AG04449 (cell line): ENCODE measurements at regions of chr7 and their contacts with region 1.

Region 1: GRCh38 chr7:108146070-108146837 is 16.1 kb upstream of the LAMB4 start:
- DNase-seq: peak; percentile 42
- H3K4me3 ChIP-seq: peak overlapping the region; percentile 42
- CTCF ChIP-seq: peak; percentile 79

Region 2: GRCh38 chr7:107743567-107744344 is 402.5 kb before region 1 on chr7 and contains the start of gene CBLL1:
- CTCF ChIA-PET with region 1: interaction called, 20 read pairs
- POLR2A ChIA-PET with region 1: no interaction called
- DNase-seq: peak; percentile 63
- H3K4me3 ChIP-seq: peak within 1 kb of the TSS; percentile 98
- CTCF ChIP-seq: peak; percentile 89

Region 3: GRCh38 chr7:107900496-107901015 is 245.7 kb before region 1 on chr7:
- CTCF ChIA-PET with region 1: interaction called, 14 read pairs
- POLR2A ChIA-PET with region 1: no interaction called
- DNase-seq: no peak
- H3K4me3 ChIP-seq: no peak overlapping the region
- CTCF ChIP-seq: no peak

Region 4: DNA sequence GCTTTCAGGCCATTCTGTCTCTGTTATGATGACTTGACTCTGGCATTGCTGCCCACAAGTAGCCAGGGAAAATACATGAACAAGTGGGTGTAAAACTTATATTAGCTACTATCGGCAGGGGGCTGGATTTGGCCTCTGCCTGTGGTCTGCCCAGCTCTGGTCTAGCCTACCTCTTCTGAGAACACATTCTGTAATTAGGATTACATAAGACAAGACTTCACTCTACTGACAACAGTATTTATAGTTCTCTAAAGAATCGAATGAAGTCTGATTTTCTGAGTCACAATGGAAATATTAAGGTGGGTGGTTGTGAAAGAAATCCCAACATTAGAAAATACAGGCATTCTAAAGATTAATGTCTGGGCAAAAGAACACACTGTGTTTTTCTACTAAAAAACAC is 199.8 kb before region 1 on chr7:
- CTCF ChIA-PET with region 1: interaction called, 16 read pairs
- POLR2A ChIA-PET with region 1: no interaction called
- DNase-seq: no peak
- H3K4me3 ChIP-seq: no peak overlapping the region
- CTCF ChIP-seq: no peak

Region 5: GRCh38 chr7:108002726-108003598 is 143.3 kb before region 1 on chr7 and contains the start of gene LAMB1:
- CTCF ChIA-PET with region 1: interaction called, 33 read pairs
- POLR2A ChIA-PET with region 1: no interaction called
- DNase-seq: no peak
- H3K4me3 ChIP-seq: peak within 1 kb of the TSS; percentile 82
- CTCF ChIP-seq: no peak

Region 6: DNA sequence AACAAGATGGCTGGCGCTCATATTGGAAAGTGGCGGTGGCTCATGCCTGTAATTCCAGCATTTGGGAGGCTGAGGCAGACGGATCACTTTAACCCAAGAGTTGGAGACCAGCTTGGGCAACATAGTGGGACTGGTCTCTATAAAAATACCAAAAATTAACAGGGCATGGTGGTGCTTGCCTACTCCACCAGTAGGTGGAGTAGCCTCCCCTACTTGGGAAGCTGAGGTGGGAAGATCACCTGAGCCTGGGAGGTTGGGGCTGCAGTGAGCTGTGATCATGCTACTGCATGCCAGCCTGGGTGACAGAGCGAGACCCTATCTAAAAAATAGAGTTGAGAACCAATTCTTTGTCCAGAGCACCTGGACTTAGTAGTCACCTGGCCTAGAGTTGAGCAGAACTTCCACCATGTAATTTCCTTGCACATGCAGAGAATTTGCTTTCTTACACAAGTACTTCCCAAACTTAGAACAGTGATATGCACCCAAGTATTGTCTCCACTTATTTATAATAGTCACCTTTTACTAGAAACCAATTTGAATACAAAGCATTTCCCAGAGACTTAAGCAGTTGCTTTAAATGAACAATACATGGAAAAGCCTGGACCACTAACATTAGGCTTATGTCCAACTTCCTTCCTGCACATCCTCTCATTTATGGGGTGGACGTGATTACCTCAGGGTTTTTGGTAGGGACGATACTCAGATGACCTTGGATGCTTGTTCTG is 32.0 kb before region 1 on chr7:
- CTCF ChIA-PET with region 1: interaction called, 16 read pairs
- POLR2A ChIA-PET with region 1: no interaction called
- DNase-seq: no peak
- H3K4me3 ChIP-seq: no peak overlapping the region
- CTCF ChIP-seq: no peak

Region 7: GRCh38 chr7:108158776-108159175 is 12.5 kb after region 1 on chr7:
- CTCF ChIA-PET with region 1: interaction called, 12 read pairs
- POLR2A ChIA-PET with region 1: no interaction called
- DNase-seq: no peak
- H3K4me3 ChIP-seq: no peak overlapping the region
- CTCF ChIP-seq: no peak

Region 8: GRCh38 chr7:108376206-108376605 is 230.0 kb after region 1 on chr7:
- CTCF ChIA-PET with region 1: no interaction called
- POLR2A ChIA-PET with region 1: no interaction called
- DNase-seq: no peak
- H3K4me3 ChIP-seq: no peak overlapping the region
- CTCF ChIP-seq: no peak